Activated CD4-positive, alpha-beta memory T cell treated with anti-CD3 and anti-CD28 coated beads, Interleukin-2, amount 10 ng/mL, durations not matched to agents 7 days and 5 days (primary cell): ENCODE measurements at regions of chr2 and their contacts with region 1.

Region 1: DNA sequence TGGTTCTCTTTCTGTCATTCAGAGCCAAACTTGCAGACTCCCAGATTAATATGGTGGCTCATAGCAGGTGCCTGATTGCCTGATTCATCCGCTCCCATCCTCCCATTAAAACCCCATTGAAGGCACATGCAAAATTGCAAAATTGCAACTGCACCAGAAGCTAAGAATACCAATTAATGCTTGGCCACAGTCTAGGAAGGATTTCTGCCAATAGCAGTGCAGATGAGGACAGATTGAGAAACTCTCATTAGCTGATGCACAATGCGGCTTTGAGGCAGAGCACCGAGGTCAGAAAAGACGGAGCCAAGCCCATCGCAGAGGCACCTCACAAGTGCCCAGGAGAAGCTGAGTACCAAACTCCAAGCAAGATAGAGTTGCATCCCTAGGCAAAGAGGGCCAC is 172.8 kb downstream of the ARL4C start:
- DNase-seq: no peak
- H3K4me3 Mint-ChIP-seq: no peak overlapping the region
- H3K27ac Mint-ChIP-seq: peak overlapping the region; percentile 58
- H3K4me1 Mint-ChIP-seq: peaks cover 48% of the 10 kb centered on the region
- H3K27me3 Mint-ChIP-seq: no peaks in the 10 kb centered on the region

Region 2: GRCh38 chr2:234308813-234309195 is 15.3 kb before region 1 on chr2:
- CTCF ChIA-PET with region 1: interaction called, 3 read pairs
- POLR2A ChIA-PET with region 1: interaction called, 14 read pairs
- DNase-seq: peak; percentile 83
- H3K4me3 Mint-ChIP-seq: peak overlapping the region; percentile 29
- H3K27ac Mint-ChIP-seq: peak overlapping the region; percentile 97
- H3K4me1 Mint-ChIP-seq: peaks cover 64% of the 10 kb centered on the region
- H3K27me3 Mint-ChIP-seq: no peaks in the 10 kb centered on the region